CD4-positive, alpha-beta memory T cell (primary cell): ENCODE measurements at regions of chr11 and their contacts with region 1.

Region 1: DNA sequence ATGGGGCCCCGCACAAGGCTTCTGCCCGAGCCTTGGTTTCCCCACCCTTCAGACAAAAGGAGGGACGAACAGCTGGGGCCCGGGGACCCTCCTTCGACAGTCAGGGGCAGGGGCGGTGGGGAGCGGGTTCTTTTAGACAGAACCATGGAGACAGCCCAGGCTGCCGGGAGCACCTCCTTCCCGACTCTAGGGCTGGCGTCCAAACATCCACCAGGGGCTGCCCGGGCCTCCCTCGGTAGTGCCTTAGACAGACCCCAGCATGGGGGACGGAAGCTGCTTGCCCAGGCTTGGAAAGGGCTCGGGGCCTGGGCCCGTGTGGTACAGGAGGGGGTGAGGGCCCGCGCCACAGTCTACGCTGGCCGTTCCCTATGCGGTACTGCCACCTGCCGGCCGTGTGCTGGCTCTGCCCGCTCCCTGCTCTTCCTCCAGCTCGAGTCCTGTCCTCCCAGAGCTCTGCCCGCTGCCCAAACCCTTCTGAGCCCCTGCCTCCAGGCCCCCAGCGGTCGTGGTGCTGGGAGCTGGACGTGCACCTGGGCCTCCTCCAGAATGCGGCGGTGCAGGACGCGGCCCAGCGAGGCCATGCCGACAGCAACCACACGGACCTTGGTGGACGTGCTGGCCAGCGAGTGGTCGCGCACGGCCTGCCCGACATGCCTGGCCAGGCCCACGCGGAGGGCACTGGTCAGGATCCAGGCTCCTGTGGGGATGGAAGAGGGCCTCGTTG is 20.1 kb downstream of the TSSC4 start:
- DNase-seq: peak; percentile 64 to 73 (median 70)
- H3K4me3 ChIP-seq: no peak overlapping the region
- H3K4me3 Mint-ChIP-seq: peak overlapping the region in 1 of 8 donors; percentile 22
- H3K27ac ChIP-seq: no peak overlapping the region
- H3K27ac Mint-ChIP-seq: no peak overlapping the region
- H3K4me1 ChIP-seq: peaks cover 11% of the 10 kb centered on the region
- H3K4me1 Mint-ChIP-seq: peaks cover 0 to 7% (median 2%) of the 10 kb centered on the region in 4 donors
- H3K27me3 ChIP-seq: no peaks in the 10 kb centered on the region
- H3K27me3 Mint-ChIP-seq: no peaks in the 10 kb centered on the region

Region 2: GRCh38 chr11:2186669-2187279 is 233.9 kb before region 1 on chr11:
- CTCF ChIA-PET with region 1: interaction called, 25 read pairs
- POLR2A ChIA-PET with region 1: interaction called, 3 read pairs
- intact Hi-C with region 1: loop called (anchors 1 kb)
- DNase-seq: peak in 4 of 5 donors; percentile 31 to 40 (median 36)
- H3K4me3 ChIP-seq: no peak overlapping the region
- H3K4me3 Mint-ChIP-seq: no peak overlapping the region
- H3K27ac ChIP-seq: no peak overlapping the region
- H3K27ac Mint-ChIP-seq: no peak overlapping the region
- H3K4me1 ChIP-seq: no peaks in the 10 kb centered on the region
- H3K4me1 Mint-ChIP-seq: peaks cover 0 to 6% (median 3%) of the 10 kb centered on the region in 4 donors
- H3K27me3 ChIP-seq: peaks cover 6% of the 10 kb centered on the region
- H3K27me3 Mint-ChIP-seq: peaks cover 8 to 22% of the 10 kb centered on the region in 2 donors

Region 3: GRCh38 chr11:2196970-2197770 is 223.5 kb before region 1 on chr11:
- CTCF ChIA-PET with region 1: interaction called, 59 read pairs
- POLR2A ChIA-PET with region 1: interaction called, 5 read pairs
- intact Hi-C with region 1: no loop called
- DNase-seq: peak; percentile 55 to 69 (median 65)
- H3K4me3 ChIP-seq: no peak overlapping the region
- H3K4me3 Mint-ChIP-seq: no peak overlapping the region
- H3K27ac ChIP-seq: no peak overlapping the region
- H3K27ac Mint-ChIP-seq: peak overlapping the region in 3 of 7 donors; percentile 45 to 75 (median 63)
- H3K4me1 ChIP-seq: no peaks in the 10 kb centered on the region
- H3K4me1 Mint-ChIP-seq: peaks cover 0 to 11% (median 5%) of the 10 kb centered on the region in 4 donors
- H3K27me3 ChIP-seq: no peaks in the 10 kb centered on the region
- H3K27me3 Mint-ChIP-seq: peaks cover 1 to 5% of the 10 kb centered on the region in 2 donors

Region 4: GRCh38 chr11:2314525-2315394 is 105.9 kb before region 1 on chr11:
- CTCF ChIA-PET with region 1: interaction called, 15 read pairs
- POLR2A ChIA-PET with region 1: no interaction called
- intact Hi-C with region 1: no loop called
- DNase-seq: no peak
- H3K4me3 ChIP-seq: no peak overlapping the region
- H3K4me3 Mint-ChIP-seq: no peak overlapping the region
- H3K27ac ChIP-seq: no peak overlapping the region
- H3K27ac Mint-ChIP-seq: no peak overlapping the region
- H3K4me1 ChIP-seq: no peaks in the 10 kb centered on the region
- H3K4me1 Mint-ChIP-seq: no peaks in the 10 kb centered on the region
- H3K27me3 ChIP-seq: no peaks in the 10 kb centered on the region
- H3K27me3 Mint-ChIP-seq: peaks cover 0 to 3% of the 10 kb centered on the region in 2 donors

Region 5: GRCh38 chr11:2409611-2410468 is 10.8 kb before region 1 on chr11:
- CTCF ChIA-PET with region 1: interaction called, 10 read pairs
- POLR2A ChIA-PET with region 1: no interaction called
- intact Hi-C with region 1: no loop called
- DNase-seq: no peak
- H3K4me3 ChIP-seq: no peak overlapping the region
- H3K4me3 Mint-ChIP-seq: no peak overlapping the region
- H3K27ac ChIP-seq: no peak overlapping the region
- H3K27ac Mint-ChIP-seq: no peak overlapping the region
- H3K4me1 ChIP-seq: no peaks in the 10 kb centered on the region
- H3K4me1 Mint-ChIP-seq: no peaks in the 10 kb centered on the region
- H3K27me3 ChIP-seq: no peaks in the 10 kb centered on the region
- H3K27me3 Mint-ChIP-seq: no peaks in the 10 kb centered on the region